ENCODE measurements at regions of chr7 and their contacts with region 1.

Region 1: GRCh38 chr7:104983578-104984539 is 30.1 kb upstream of the KMT2E start:
- DNase-seq: peak; percentile 80
- ATAC-seq: peak; percentile 89
- H3K4me3 Mint-ChIP-seq: peak overlapping the region; percentile 98
- H3K27ac Mint-ChIP-seq: peak overlapping the region; percentile 99
- H3K4me1 Mint-ChIP-seq: peaks cover 75% of the 10 kb centered on the region
- H3K27me3 Mint-ChIP-seq: no peaks in the 10 kb centered on the region
- CTCF ChIP-seq: no peak

Region 2: DNA sequence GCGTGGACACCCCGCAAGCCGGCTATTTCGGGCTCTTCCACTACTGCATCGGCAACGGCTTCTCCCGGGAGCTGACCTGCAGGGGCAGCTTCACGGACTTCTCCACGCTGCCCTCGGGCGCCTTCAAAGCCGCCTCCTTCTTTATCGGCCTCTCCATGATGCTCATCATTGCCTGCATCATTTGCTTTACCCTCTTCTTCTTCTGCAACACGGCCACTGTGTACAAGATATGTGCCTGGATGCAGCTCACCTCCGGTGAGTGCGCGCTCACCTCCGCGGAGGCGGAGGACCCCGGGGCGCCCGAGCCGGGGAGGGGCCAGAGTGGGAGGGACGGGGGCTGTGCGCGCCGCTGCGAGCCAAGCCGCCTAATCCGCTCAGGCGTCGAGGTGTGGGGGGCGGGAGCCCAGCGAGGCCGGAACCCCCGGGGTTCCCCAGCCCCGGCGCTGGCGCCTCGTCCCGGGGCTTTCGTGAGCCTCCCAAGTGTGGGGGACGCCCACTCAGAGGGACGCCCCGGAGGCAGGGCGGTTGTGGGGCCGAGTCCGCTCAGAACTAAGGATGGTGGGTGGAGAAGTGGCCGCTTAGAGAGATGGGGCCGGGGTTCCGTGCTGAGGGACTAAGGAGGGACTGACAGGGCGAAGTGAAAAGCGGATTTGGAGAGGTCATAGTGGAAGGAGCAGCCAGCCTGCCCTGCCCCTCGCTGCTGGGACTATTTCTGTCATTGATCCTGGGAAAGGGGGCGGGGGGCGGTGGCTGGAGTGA is 654.7 kb before region 1 on chr7:
- CTCF ChIA-PET with region 1: no interaction called
- POLR2A ChIA-PET with region 1: no interaction called
- intact Hi-C with region 1: no loop called
- DNase-seq: no peak
- ATAC-seq: no peak
- H3K4me3 Mint-ChIP-seq: no peak overlapping the region
- H3K27ac Mint-ChIP-seq: no peak overlapping the region
- H3K4me1 Mint-ChIP-seq: peaks cover 6% of the 10 kb centered on the region
- H3K27me3 Mint-ChIP-seq: peaks cover 56% of the 10 kb centered on the region
- CTCF ChIP-seq: no peak

Region 3: GRCh38 chr7:104900525-104901239 is 83.2 kb before region 1 on chr7:
- CTCF ChIA-PET with region 1: no interaction called
- POLR2A ChIA-PET with region 1: no interaction called
- intact Hi-C with region 1: no loop called
- DNase-seq: no peak
- ATAC-seq: no peak
- H3K4me3 Mint-ChIP-seq: no peak overlapping the region
- H3K27ac Mint-ChIP-seq: no peak overlapping the region
- H3K4me1 Mint-ChIP-seq: peaks cover 2% of the 10 kb centered on the region
- H3K27me3 Mint-ChIP-seq: peaks cover 3% of the 10 kb centered on the region
- CTCF ChIP-seq: no peak

Region 4: GRCh38 chr7:104931181-104931781 is 52.6 kb before region 1 on chr7:
- CTCF ChIA-PET with region 1: interaction called, 92 read pairs
- POLR2A ChIA-PET with region 1: interaction called, 21 read pairs
- intact Hi-C with region 1: loop called (anchors 2 kb)
- DNase-seq: no peak
- ATAC-seq: no peak
- H3K4me3 Mint-ChIP-seq: no peak overlapping the region
- H3K27ac Mint-ChIP-seq: peak overlapping the region; percentile 88
- H3K4me1 Mint-ChIP-seq: peaks cover 65% of the 10 kb centered on the region
- H3K27me3 Mint-ChIP-seq: no peaks in the 10 kb centered on the region
- CTCF ChIP-seq: no peak

Region 5: DNA sequence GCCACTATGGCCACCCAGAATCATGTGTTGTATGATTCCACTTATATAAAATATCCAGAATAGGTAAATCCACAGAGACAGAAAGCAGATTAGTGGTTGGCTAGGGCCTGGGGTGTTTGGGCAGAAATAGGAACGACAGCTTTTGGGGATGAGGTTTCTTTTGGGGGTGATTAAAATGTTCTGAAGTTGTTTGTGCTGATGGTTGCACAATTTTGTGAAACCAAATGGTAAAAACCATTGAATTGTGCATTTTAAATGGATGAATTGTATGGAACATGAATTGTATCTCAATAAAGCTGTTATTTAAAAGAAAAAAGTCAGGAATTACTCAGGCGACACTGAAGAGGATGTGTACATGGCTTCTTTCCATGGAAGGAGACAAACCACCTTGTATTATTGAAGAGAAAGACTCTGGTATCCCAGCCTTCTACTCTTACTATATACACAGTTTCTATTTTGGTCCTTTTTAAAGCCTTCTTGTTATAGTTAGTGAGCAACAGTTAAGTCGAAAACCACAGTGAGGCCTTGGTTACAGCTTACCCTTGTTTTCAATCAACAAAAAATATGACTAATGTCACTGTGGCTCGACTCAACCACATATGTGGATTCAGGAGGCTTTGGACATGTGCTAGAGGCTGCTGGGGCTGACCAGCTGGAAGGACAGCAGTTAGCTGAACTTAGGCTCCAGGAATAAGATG is 27.0 kb before region 1 on chr7:
- CTCF ChIA-PET with region 1: interaction called, 9 read pairs
- POLR2A ChIA-PET with region 1: interaction called, 4 read pairs
- intact Hi-C with region 1: loop called (anchors 2 kb)
- DNase-seq: no peak
- ATAC-seq: peak; percentile 47
- H3K4me3 Mint-ChIP-seq: no peak overlapping the region
- H3K27ac Mint-ChIP-seq: peak overlapping the region; percentile 77
- H3K4me1 Mint-ChIP-seq: peaks cover 48% of the 10 kb centered on the region
- H3K27me3 Mint-ChIP-seq: no peaks in the 10 kb centered on the region
- CTCF ChIP-seq: no peak

Region 6: GRCh38 chr7:105024743-105025142 is 40.9 kb after region 1 on chr7:
- CTCF ChIA-PET with region 1: interaction called, 31 read pairs
- POLR2A ChIA-PET with region 1: interaction called, 24 read pairs
- intact Hi-C with region 1: no loop called
- DNase-seq: no peak
- ATAC-seq: no peak
- H3K4me3 Mint-ChIP-seq: no peak overlapping the region
- H3K27ac Mint-ChIP-seq: no peak overlapping the region
- H3K4me1 Mint-ChIP-seq: peaks cover 91% of the 10 kb centered on the region
- H3K27me3 Mint-ChIP-seq: no peaks in the 10 kb centered on the region
- CTCF ChIP-seq: no peak

Region 7: GRCh38 chr7:105046414-105046813 is 62.6 kb after region 1 on chr7:
- CTCF ChIA-PET with region 1: interaction called, 117 read pairs
- POLR2A ChIA-PET with region 1: interaction called, 8 read pairs
- intact Hi-C with region 1: loop called (anchors 1 kb)
- DNase-seq: no peak
- ATAC-seq: no peak
- H3K4me3 Mint-ChIP-seq: no peak overlapping the region
- H3K27ac Mint-ChIP-seq: no peak overlapping the region
- H3K4me1 Mint-ChIP-seq: peaks cover 34% of the 10 kb centered on the region
- H3K27me3 Mint-ChIP-seq: no peaks in the 10 kb centered on the region
- CTCF ChIP-seq: no peak

Region 8: DNA sequence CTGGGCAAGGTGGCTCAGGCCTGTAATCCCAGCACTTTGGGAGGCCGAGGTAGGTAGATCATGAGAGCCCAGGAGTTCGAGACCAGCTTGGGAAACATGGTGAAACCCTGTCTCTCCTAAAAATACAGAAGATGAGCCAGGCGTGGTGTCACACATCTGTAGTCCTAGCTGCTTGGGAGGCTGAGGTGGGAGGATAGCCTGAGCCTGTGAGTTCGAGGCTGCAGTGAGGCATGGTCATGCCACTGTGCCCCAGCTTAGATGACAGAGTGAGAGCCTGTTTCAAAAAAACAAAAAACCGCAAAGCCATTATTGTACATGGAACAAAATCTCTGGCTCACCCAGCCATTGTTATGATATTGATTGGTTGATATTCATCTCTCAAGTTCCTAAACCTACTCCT is 83.8 kb after region 1 on chr7:
- CTCF ChIA-PET with region 1: interaction called, 11 read pairs
- POLR2A ChIA-PET with region 1: no interaction called
- intact Hi-C with region 1: loop called (anchors 2 kb)
- DNase-seq: no peak
- ATAC-seq: no peak
- H3K4me3 Mint-ChIP-seq: no peak overlapping the region
- H3K27ac Mint-ChIP-seq: no peak overlapping the region
- H3K4me1 Mint-ChIP-seq: no peaks in the 10 kb centered on the region
- H3K27me3 Mint-ChIP-seq: no peaks in the 10 kb centered on the region
- CTCF ChIP-seq: no peak

Region 9: DNA sequence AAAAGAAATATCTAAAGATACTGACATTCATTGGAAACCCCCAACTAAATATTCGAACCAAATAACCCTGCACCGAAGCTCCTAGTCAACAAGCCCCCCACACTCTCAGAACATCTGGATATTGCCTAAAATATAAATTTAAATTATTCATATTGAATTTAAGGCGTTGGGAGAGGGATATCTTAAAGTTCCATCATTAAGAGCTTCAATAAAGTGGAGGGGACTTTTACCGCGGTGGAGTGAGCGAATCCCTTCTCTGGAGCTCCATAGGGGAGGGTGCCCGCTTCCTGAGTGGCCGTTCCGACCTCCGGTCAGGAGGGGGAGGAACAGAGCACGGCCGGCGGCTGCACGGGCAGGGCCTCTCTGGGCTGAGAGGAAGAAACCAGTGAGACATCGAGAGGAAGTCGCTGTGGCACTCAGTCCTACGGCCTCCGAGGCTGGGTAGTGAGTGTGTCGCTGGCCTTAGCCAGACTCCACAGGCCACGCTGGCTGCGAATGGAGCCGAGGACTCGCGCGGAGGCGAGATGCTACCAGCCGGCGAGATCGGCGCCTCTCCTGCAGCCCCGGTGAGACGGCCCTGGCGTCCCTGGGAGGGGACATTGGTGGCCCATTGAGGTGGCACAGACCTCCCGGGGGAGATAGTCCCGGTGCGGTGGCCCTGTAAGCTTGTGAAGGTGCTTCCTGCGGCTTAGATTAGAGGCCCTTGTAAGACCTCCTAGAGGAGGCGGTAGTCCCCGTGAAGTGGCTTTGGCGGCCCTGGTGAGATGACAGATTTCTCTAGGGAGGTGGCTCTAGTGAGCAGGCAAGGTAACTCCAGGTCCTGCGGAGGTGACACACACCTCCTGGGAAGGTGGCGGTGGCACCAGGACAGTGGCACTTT is 548.2 kb after region 1 on chr7 and contains the start of gene RINT1:
- CTCF ChIA-PET with region 1: no interaction called
- POLR2A ChIA-PET with region 1: no interaction called
- intact Hi-C with region 1: loop called (anchors 1 kb)
- DNase-seq: peak; percentile 90
- ATAC-seq: peak; percentile 92
- H3K4me3 Mint-ChIP-seq: peak within 1 kb of the TSS; percentile 91
- H3K27ac Mint-ChIP-seq: peak within 1 kb of the TSS; percentile 96
- H3K4me1 Mint-ChIP-seq: peaks cover 33% of the 10 kb centered on the region
- H3K27me3 Mint-ChIP-seq: no peaks in the 10 kb centered on the region
- CTCF ChIP-seq: no peak
- total RNA-seq, gene RINT1: 31.1 and 35.5 TPM in 2 replicates